A673 (cell line): ENCODE measurements at regions of chr12 and their contacts with region 1.

Region 1: GRCh38 chr12:15522565-15523187 is 200.4 kb downstream of the PTPRO start:
- DNase-seq: peak; percentile 80
- H3K4me3 ChIP-seq: no peak overlapping the region
- H3K27ac ChIP-seq: no peak overlapping the region
- H3K4me1 ChIP-seq: peaks cover 10% of the 10 kb centered on the region
- H3K27me3 ChIP-seq: no peaks in the 10 kb centered on the region
- CTCF ChIP-seq: peak; percentile 76

Region 2: DNA sequence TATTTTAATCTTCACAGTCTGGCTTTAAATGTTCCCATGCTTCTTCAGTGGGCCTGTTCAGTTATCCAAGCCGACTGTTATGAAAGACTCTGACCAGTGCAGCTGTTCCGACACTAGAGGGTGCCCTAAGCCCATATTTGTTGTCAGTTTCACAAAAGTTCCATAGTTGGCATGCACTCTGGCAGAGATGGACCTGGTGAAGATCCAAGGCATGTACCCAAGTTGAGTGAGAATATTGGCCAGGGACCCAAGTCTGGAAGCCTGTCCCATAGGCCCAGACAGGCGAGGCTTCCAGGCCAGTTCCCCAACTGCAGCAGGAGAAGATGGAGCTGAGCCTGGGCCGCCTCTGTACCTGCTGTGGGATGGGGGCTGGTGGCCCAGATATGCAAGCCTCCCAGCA is 798.9 kb before region 1 on chr12:
- CTCF ChIA-PET with region 1: no interaction called
- POLR2A ChIA-PET with region 1: no interaction called
- intact Hi-C with region 1: loop called (anchors 10 kb)
- DNase-seq: peak; percentile 76
- H3K4me3 ChIP-seq: no peak overlapping the region
- H3K27ac ChIP-seq: no peak overlapping the region
- H3K4me1 ChIP-seq: no peaks in the 10 kb centered on the region
- H3K27me3 ChIP-seq: no peaks in the 10 kb centered on the region
- CTCF ChIP-seq: peak; percentile 73

Region 3: DNA sequence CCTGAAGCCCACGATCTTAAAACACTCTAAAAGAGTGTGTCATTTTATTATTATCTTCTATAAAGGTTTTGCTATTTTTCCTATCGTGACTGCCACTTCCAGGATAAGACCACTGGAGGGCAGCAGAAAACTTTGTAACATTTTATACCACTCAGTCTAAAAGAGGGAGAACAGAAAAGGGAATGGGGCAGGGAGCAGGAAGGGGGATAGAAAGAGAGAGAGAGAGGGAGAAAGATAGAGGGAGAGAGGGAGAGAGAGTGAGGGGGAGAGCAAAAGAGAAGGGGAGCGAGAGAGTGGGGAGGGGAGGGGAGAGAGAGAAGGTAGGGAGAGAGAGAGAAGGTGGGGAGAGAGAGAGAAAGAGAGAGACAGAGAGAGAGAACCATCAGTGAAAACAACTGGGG is 677.3 kb before region 1 on chr12:
- CTCF ChIA-PET with region 1: no interaction called
- POLR2A ChIA-PET with region 1: no interaction called
- intact Hi-C with region 1: loop called (anchors 5 kb)
- DNase-seq: peak; percentile 79
- H3K4me3 ChIP-seq: no peak overlapping the region
- H3K27ac ChIP-seq: no peak overlapping the region
- H3K4me1 ChIP-seq: no peaks in the 10 kb centered on the region
- H3K27me3 ChIP-seq: no peaks in the 10 kb centered on the region
- CTCF ChIP-seq: peak; percentile 84

Region 4: DNA sequence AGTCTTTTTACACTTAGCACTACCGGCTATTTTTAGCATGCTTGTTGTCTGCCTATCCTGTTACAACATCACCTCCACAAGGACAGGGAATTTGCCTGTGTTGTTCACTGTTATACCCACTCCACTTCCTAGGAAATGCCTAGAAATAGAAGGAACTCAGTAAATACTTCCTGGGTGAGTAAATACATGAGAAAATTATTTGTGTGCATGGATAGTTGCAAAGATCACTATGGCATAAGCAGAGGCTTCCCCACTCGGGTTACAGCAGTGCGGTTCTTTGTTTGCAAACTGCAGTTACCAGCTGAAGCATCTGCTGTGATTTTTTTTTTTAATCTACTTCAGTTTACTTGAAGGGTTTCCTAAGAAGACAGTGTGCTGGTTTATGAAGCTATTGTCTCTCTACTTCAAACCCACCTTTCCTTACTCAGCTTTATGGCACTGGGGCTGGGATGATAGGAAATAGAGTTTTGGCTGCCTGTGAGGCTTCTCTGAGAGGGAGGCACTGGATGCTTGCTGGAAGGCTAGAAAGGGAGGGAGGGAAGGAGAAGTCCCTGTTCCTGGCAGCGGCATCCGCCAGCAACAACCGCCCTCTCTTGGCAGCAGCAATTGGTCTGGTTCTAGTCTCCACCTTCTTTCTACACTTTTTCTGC is 520.8 kb before region 1 on chr12:
- CTCF ChIA-PET with region 1: no interaction called
- POLR2A ChIA-PET with region 1: no interaction called
- intact Hi-C with region 1: loop called (anchors 10 kb)
- DNase-seq: no peak
- H3K4me3 ChIP-seq: no peak overlapping the region
- H3K27ac ChIP-seq: no peak overlapping the region
- H3K4me1 ChIP-seq: no peaks in the 10 kb centered on the region
- H3K27me3 ChIP-seq: no peaks in the 10 kb centered on the region
- CTCF ChIP-seq: no peak

Region 5: GRCh38 chr12:15151161-15152120 is 371.2 kb before region 1 on chr12:
- CTCF ChIA-PET with region 1: no interaction called
- POLR2A ChIA-PET with region 1: no interaction called
- intact Hi-C with region 1: loop called (anchors 2 kb)
- DNase-seq: peak; percentile 44
- H3K4me3 ChIP-seq: no peak overlapping the region
- H3K27ac ChIP-seq: no peak overlapping the region
- H3K4me1 ChIP-seq: peaks cover 7% of the 10 kb centered on the region
- H3K27me3 ChIP-seq: no peaks in the 10 kb centered on the region
- CTCF ChIP-seq: peak; percentile 64

Region 6: DNA sequence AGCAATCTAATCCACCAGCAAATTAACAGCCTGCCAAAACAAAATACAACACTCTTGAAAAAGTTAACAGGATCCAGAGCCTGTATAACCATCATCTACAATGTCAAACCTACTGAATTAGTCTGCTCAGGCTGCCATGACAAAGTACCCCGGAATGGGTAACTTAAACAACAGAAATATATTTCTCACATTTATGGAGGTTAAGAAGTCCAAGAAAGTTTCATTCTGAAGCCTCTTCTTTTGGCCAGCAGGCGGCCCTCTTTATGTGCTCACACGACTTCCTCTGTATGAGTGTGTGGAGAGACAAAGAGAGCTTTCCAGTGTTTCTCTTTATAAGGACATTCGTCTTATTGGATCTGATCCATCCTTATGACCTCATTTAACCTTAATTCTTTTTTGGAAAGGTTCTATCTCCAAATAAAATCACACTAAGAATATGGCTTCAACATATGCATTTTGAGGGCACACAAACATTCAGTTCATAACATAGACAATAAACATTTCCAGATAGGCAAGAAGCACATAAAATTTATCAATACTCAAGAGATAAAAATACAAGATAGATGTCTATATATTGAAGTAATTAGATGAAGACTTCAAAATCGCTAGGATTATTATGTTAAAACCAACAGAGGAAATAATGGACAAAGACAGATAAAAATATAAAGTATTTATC is 295.5 kb before region 1 on chr12:
- CTCF ChIA-PET with region 1: interaction called, 4 read pairs
- POLR2A ChIA-PET with region 1: no interaction called
- intact Hi-C with region 1: loop called (anchors 1 kb)
- DNase-seq: peak; percentile 71
- H3K4me3 ChIP-seq: no peak overlapping the region
- H3K27ac ChIP-seq: no peak overlapping the region
- H3K4me1 ChIP-seq: no peaks in the 10 kb centered on the region
- H3K27me3 ChIP-seq: peaks cover 17% of the 10 kb centered on the region
- CTCF ChIP-seq: peak; percentile 79

Region 7: DNA sequence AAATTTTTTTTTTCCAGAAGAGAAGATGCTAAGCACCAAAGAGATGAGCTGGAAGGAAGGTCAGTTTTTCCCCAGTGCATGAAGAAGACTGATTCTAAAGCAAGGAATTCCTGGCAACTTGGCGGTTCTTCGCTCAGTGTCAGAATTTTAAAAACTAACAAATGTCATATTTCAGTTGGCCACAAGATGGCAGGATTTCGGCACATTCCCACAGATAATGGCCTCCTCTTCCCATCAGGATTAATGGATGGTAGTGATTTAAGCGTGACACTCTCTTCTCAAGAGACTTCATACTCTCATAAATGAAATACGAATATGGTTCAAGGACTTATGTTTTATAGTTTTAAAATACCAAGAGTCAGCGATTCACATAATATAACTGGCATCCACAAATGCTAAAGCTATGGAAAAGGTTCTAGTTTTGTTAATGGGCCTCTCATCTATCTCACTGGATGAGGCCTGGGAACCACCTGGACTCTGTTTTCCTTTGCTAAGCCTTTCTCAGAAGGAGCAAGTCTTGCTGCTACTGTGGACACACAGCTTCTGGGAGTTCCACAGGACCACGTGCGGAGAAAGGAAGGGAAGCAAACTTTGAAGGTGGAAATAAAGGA is 246.5 kb before region 1 on chr12:
- CTCF ChIA-PET with region 1: interaction called, 4 read pairs
- POLR2A ChIA-PET with region 1: no interaction called
- intact Hi-C with region 1: loop called (anchors 1 kb)
- DNase-seq: peak; percentile 70
- H3K4me3 ChIP-seq: no peak overlapping the region
- H3K27ac ChIP-seq: no peak overlapping the region
- H3K4me1 ChIP-seq: peaks cover 37% of the 10 kb centered on the region
- H3K27me3 ChIP-seq: no peaks in the 10 kb centered on the region
- CTCF ChIP-seq: peak; percentile 74

Region 8: GRCh38 chr12:16891673-16892072 is 1369.0 kb after region 1 on chr12:
- CTCF ChIA-PET with region 1: no interaction called
- POLR2A ChIA-PET with region 1: no interaction called
- intact Hi-C with region 1: no loop called
- DNase-seq: no peak
- H3K4me3 ChIP-seq: no peak overlapping the region
- H3K27ac ChIP-seq: no peak overlapping the region
- H3K4me1 ChIP-seq: no peaks in the 10 kb centered on the region
- H3K27me3 ChIP-seq: no peaks in the 10 kb centered on the region
- CTCF ChIP-seq: no peak